Caco-2 (cell line): ENCODE measurements at regions of chr1 and their contacts with region 1.

Region 1: DNA sequence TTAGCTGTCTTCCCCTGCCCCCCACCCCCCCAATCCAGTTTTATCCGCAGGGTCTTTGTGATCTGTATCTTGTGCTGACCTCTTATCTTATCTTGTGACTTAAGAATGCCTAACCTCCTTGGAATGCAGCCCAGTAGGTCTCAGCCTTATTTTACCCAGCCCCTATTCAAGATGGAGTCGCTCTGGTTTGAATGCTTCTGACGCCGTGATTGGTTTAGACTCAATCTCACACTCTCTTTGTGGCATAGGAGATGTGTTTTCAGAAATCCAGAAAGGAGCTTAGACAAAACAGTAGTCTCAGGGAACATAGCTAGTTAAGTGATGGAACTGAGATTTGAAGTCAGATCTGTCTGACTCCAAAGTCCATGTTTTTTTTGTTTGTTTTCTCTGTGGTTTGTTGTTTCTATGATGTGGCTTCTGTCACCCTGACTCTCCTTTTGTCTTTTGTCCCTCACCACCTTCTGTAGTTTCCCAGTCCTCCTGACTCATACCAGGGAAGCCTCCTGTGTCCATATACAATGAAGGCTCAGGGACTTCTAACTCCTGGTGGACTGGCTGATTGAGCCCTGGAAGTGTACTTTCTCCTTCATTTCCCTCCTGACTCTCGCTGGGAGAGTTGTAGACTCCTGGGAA is 18.1 kb upstream of the USP24 start:
- DNase-seq: peak; percentile 32 to 39
- H3K4me3 ChIP-seq: no peak overlapping the region
- H3K4me3 Mint-ChIP-seq: no peak overlapping the region
- H3K27ac Mint-ChIP-seq: peak overlapping the region; percentile 89
- H3K4me1 ChIP-seq: peaks cover 23% of the 10 kb centered on the region
- H3K4me1 Mint-ChIP-seq: peaks cover 12% of the 10 kb centered on the region
- H3K27me3 ChIP-seq: no peaks in the 10 kb centered on the region
- H3K27me3 Mint-ChIP-seq: no peaks in the 10 kb centered on the region
- CTCF ChIP-seq: no peak

Region 2: GRCh38 chr1:55215256-55216021 is 17.8 kb before region 1 on chr1 and contains the start of gene USP24:
- CTCF ChIA-PET with region 1: no interaction called
- POLR2A ChIA-PET with region 1: no interaction called
- intact Hi-C with region 1: loop called (anchors 2 kb)
- DNase-seq: peak; percentile 82 to 85
- H3K4me3 ChIP-seq: peak within 1 kb of the TSS; percentile 84
- H3K4me3 Mint-ChIP-seq: peak within 1 kb of the TSS; percentile 91
- H3K27ac Mint-ChIP-seq: peak within 1 kb of the TSS; percentile 100
- H3K4me1 ChIP-seq: peaks cover 26% of the 10 kb centered on the region
- H3K4me1 Mint-ChIP-seq: peaks cover 45% of the 10 kb centered on the region
- H3K27me3 ChIP-seq: no peaks in the 10 kb centered on the region
- H3K27me3 Mint-ChIP-seq: no peaks in the 10 kb centered on the region
- CTCF ChIP-seq: no peak
- total RNA-seq, gene USP24: 34.7 and 36.4 TPM in 2 replicates